PC-3 (cell line): ENCODE measurements at regions of chr6 and their contacts with region 1.

Region 1: GRCh38 chr6:2634139-2634964 is 116.4 kb downstream of the MYLK4 start:
- DNase-seq: peak; percentile 90
- ATAC-seq: peak; percentile 76
- H3K4me3 ChIP-seq: peak overlapping the region; percentile 57
- H3K27ac ChIP-seq: peak overlapping the region; percentile 56
- H3K4me1 ChIP-seq: peaks cover 48% of the 10 kb centered on the region
- H3K27me3 ChIP-seq: no peaks in the 10 kb centered on the region
- CTCF ChIP-seq: peak; percentile 94

Region 2: GRCh38 chr6:1686117-1687098 is 947.9 kb before region 1 on chr6:
- CTCF ChIA-PET with region 1: no interaction called
- POLR2A ChIA-PET with region 1: no interaction called
- intact Hi-C with region 1: loop called (anchors 2 kb)
- DNase-seq: peak; percentile 94
- ATAC-seq: peak; percentile 78
- H3K4me3 ChIP-seq: peak overlapping the region; percentile 34; the same call in 1 of the 2 replicates
- H3K27ac ChIP-seq: peak overlapping the region; percentile 92
- H3K4me1 ChIP-seq: peaks cover 55% of the 10 kb centered on the region
- H3K27me3 ChIP-seq: no peaks in the 10 kb centered on the region
- CTCF ChIP-seq: peak; percentile 74

Region 3: DNA sequence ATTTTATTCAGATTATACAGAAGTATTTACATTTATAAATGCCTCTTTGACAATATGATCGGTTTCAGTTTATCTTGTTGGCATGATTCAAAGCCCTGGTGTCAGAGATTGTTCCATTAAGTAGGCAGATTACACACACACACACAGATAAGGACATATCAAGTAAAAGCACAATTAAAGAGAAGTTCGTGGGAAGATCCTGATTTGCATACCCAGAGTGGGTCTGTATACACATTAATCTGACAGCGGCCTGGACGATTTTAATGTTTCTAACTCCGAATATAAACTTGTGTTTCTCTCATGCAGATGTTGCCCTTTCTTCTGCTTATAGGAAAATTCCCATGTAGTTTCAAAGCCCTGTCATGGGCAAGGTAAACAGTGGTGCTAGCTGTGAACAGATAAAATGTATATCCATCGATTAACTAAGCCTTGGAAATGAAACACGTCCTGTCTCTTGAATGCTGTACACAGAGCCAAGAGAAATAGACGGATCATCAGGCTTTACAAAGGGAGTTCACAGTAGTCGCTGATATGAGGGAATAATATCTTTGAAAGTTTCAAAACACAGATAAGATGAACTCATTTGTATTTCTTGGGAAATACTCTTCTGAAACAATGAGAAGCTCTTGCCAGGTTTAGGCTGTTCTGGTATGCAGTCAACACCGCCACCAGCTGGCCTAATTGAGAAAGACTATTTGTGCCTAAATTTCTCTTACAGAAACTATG is 280.8 kb before region 1 on chr6:
- CTCF ChIA-PET with region 1: no interaction called
- POLR2A ChIA-PET with region 1: no interaction called
- intact Hi-C with region 1: loop called (anchors 5 kb)
- DNase-seq: peak; percentile 90
- ATAC-seq: peak; percentile 61
- H3K4me3 ChIP-seq: no peak overlapping the region
- H3K27ac ChIP-seq: no peak overlapping the region
- H3K4me1 ChIP-seq: no peaks in the 10 kb centered on the region
- H3K27me3 ChIP-seq: no peaks in the 10 kb centered on the region
- CTCF ChIP-seq: peak; percentile 94

Region 4: GRCh38 chr6:2531426-2532215 is 102.7 kb before region 1 on chr6:
- CTCF ChIA-PET with region 1: no interaction called
- POLR2A ChIA-PET with region 1: no interaction called
- intact Hi-C with region 1: loop called (anchors 5 kb)
- DNase-seq: peak; percentile 93
- ATAC-seq: peak; percentile 97
- H3K4me3 ChIP-seq: no peak overlapping the region
- H3K27ac ChIP-seq: peak overlapping the region; percentile 71
- H3K4me1 ChIP-seq: peaks cover 17% of the 10 kb centered on the region
- H3K27me3 ChIP-seq: no peaks in the 10 kb centered on the region
- CTCF ChIP-seq: no peak

Region 5: DNA sequence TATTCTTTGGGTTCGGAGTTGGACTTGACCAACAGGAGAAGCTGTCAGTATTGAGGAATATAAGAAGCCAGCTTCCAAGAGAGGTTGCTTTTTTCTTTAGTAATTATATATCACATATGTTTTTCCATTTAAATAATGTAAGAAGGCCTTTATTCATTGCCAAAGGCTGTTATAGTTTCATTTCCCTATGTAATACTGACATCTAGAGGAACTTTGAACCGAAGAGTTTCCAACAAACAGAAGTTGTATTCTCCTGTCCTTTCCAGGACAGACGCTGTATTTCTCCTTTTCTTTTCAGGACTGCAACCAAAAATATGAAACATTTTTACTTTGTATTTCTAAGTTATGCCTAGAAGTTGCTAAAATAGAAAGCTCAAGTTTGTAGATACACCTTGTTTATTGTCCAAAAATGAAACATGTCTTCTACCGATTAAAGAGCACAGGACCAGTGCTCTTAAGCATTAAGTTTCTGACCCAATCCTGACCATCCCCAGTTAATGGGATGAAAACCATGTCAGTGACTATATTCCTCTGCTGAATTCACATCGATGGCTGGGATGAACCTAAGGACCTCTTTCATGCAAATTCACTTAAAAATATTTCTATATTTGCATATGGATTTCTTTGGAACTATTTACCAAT is 61.2 kb after region 1 on chr6:
- CTCF ChIA-PET with region 1: interaction called, 6 read pairs
- POLR2A ChIA-PET with region 1: no interaction called
- intact Hi-C with region 1: loop called (anchors 1 kb)
- DNase-seq: peak; percentile 78
- ATAC-seq: peak; percentile 78
- H3K4me3 ChIP-seq: no peak overlapping the region
- H3K27ac ChIP-seq: no peak overlapping the region
- H3K4me1 ChIP-seq: no peaks in the 10 kb centered on the region
- H3K27me3 ChIP-seq: no peaks in the 10 kb centered on the region
- CTCF ChIP-seq: peak; percentile 84